Activated naive CD4-positive, alpha-beta T cell treated with anti-CD3 and anti-CD28 coated beads for 36 hours (primary cell): ENCODE measurements at regions of chr11 and their contacts with region 1.

Region 1: DNA sequence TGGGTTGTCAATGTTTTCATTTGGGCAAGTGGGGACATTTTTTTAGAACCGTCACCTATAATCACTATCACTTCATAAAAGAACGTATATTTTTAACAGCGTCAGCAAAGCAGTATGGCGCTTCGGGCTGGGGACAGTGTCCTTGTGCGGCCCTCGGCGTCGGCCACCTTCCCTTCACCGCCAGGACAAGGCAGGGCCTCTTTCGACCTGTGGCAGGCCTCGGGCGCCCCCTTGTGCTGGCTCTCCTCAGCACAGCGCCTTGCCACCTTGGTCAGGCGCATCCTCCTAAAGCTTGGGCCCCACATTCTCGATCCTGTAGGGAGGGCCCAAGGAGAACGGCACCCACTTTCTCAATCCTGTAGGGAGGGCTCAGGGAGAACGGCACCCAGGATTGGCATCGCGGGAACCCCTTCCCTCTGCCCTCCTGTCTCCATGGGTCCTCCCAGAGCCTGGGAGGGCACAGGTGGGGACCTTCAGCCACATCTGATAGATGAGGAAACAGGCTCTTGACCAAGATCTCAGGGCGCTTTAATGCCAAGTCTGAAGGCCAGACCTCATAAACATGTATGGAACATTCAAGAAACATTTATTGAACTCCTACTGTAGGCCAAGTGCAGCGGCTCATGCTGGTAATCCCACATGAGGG is 11.5 kb upstream of the FADD start:
- DNase-seq: peak; percentile 74
- H3K4me3 Mint-ChIP-seq: no peak overlapping the region
- H3K27ac Mint-ChIP-seq: no peak overlapping the region
- H3K4me1 Mint-ChIP-seq: peaks cover 5% of the 10 kb centered on the region
- H3K27me3 Mint-ChIP-seq: no peaks in the 10 kb centered on the region

Region 2: GRCh38 chr11:69918938-69919650 is 272.5 kb before region 1 on chr11:
- CTCF ChIA-PET with region 1: interaction called, 16 read pairs
- intact Hi-C with region 1: loop called (anchors 1 kb)
- DNase-seq: peak; percentile 73
- H3K4me3 Mint-ChIP-seq: no peak overlapping the region
- H3K27ac Mint-ChIP-seq: no peak overlapping the region
- H3K4me1 Mint-ChIP-seq: no peaks in the 10 kb centered on the region
- H3K27me3 Mint-ChIP-seq: peaks cover 29% of the 10 kb centered on the region

Region 3: GRCh38 chr11:69950120-69950519 is 241.5 kb before region 1 on chr11:
- CTCF ChIA-PET with region 1: interaction called, 4 read pairs
- intact Hi-C with region 1: loop called (anchors 1 kb)
- DNase-seq: peak; percentile 69
- H3K4me3 Mint-ChIP-seq: no peak overlapping the region
- H3K27ac Mint-ChIP-seq: no peak overlapping the region
- H3K4me1 Mint-ChIP-seq: no peaks in the 10 kb centered on the region
- H3K27me3 Mint-ChIP-seq: peaks cover 10% of the 10 kb centered on the region

Region 4: DNA sequence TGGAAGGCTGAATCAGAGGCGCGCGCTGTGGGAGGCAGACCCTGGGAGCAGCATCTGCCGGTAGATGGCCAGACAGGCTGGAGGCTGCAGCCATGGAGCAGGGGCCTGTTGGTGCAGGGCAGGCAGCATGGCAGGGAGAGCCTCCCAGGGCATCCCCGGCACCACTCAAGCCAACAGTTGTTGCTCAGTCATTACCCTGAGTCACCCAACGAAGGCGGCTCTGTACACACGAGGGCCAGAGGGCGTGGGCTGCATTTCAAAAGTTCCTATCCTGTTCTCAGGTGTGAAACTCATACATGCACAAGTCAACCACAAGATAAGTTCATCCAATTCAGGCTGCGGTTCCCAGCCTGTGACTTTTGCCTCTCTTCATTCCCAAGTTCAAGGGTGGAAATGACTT is 110.9 kb before region 1 on chr11:
- CTCF ChIA-PET with region 1: no interaction called
- intact Hi-C with region 1: no loop called
- DNase-seq: no peak
- H3K4me3 Mint-ChIP-seq: no peak overlapping the region
- H3K27ac Mint-ChIP-seq: no peak overlapping the region
- H3K4me1 Mint-ChIP-seq: no peaks in the 10 kb centered on the region
- H3K27me3 Mint-ChIP-seq: peaks cover 19% of the 10 kb centered on the region

Region 5: DNA sequence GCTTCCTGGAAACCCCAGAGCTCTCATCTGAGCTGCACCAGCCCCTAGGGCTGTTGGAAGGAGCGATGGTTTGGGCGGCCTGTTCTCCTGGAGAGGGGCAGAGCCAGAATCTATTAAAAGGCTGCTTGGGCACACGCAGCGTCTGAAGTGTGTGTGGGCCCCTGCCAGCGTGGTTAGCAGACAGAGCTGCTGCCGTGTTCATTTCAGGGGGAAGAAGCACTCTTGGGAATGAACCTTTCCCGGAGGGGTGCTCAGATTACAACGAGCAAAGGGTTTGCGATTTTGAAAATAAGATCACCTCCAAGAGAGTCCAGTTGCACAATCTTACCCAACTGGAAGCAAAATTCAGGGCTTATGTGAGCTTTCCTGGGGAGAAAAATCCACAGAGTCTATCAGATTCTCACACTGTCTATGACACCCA is 100.6 kb before region 1 on chr11:
- CTCF ChIA-PET with region 1: no interaction called
- intact Hi-C with region 1: loop called (anchors 10 kb)
- DNase-seq: no peak
- H3K4me3 Mint-ChIP-seq: no peak overlapping the region
- H3K27ac Mint-ChIP-seq: no peak overlapping the region
- H3K4me1 Mint-ChIP-seq: no peaks in the 10 kb centered on the region
- H3K27me3 Mint-ChIP-seq: no peaks in the 10 kb centered on the region